ENCODE measurements at regions of chr9 and their contacts with region 1.

Region 1: DNA sequence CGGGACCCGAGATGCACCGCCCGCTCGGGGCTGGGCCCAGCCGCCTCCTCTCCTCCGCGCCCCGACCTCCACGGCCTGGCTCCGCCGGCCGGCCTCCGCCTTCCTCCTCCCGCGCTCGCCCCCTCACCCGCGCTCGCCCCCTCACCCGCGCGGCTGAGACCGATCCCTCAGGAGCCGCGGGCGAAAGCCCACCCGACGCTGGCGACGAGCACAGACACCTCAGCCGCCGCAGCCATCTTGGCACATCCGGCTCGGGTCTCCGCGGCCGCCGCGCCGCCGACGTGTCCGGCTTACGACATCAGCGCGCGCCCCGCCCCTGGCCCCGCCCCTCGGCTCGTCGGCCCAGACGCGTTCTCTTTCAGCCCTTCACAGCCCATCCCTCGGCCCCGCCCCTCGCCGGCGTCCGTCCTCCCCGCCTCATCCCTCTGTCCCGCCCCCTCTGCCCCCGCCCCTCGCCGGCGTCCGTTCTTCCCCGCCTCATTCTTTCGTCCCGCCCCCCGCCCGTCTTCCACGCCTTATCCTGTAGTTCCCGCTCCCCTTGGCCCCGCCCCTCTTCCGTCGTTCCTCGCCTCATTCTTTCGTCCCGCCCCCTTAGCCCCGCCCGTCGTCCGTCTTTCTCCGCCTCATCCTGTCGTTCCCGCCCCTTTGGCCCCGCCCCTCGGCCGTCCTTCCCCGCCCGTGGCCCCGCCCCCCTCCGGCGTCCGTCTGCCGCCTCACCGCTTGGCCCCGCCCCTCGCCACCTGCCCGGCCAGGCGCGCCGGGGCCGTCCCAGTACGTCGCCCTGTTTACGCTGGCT is at the start of gene SEC16A:
- DNase-seq: peak; percentile 98 to 100 (median 99)
- ATAC-seq: peak; percentile 75
- H3K4me3 ChIP-seq: peak within 1 kb of the TSS; percentile 72 to 97
- H3K4me3 Mint-ChIP-seq: peak within 1 kb of the TSS; percentile 98
- H3K27ac ChIP-seq: peak within 1 kb of the TSS; percentile 97 to 99
- H3K27ac Mint-ChIP-seq: peak within 1 kb of the TSS; percentile 99
- H3K4me1 ChIP-seq: peaks cover 29% of the 10 kb centered on the region
- H3K4me1 Mint-ChIP-seq: peaks cover 37% of the 10 kb centered on the region
- H3K27me3 ChIP-seq: no peaks in the 10 kb centered on the region
- H3K27me3 Mint-ChIP-seq: no peaks in the 10 kb centered on the region
- CTCF ChIP-seq: no peak
- total RNA-seq, gene SEC16A: 81.0 to 83.5 TPM

Region 2: DNA sequence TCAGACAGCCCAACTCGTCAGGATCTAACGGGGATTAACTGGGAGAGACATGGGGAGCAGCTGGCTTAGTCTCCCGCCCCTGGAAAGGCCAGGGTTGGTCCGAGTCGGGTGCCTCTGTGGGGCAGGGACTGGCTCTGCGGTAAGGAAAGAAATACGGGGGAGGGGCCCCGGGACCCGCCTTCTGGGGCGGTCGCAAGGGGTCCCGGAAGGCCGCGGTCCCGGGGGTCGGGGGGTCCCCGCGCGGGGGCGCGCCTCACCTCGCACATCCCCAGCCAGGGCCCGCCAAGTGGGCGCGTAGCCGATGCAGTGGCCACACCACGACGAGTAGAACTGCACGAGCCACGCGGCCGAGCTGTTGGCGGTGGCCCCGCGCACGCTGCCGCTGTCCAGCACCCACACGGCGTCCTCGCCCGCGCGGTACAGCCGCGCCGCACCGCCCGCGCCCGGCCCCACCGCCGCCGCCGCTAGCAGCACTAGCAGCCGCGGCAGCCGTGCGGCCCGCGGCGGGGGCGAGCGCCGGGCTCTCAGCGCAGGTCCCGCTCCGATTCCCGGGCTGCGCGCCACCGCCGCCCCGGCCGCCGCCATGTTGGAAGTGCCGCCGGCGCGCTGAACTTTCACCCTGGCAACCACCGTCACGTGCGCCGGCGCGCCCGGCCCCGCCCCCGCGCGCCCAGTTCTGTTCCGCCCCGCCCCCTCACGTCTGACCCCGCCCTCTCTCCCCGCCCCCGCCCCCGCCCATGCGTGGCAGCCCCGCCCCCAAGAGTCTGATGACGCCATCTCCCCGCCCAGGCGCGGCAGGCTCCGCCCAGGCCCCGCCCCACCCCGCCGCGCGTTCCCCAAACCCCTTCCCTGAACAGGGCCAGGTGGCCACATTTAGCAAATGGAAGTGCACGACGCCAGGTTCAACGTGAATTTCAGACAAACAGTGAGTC is 237.5 kb before region 1 on chr9 and contains the start of gene QSOX2:
- CTCF ChIA-PET with region 1: no interaction called
- POLR2A ChIA-PET with region 1: no interaction called
- intact Hi-C with region 1: loop called in 1 of 2 experiments (anchors 5 kb)
- DNase-seq: peak; percentile 69 to 93 (median 82)
- ATAC-seq: peak; percentile 84
- H3K4me3 ChIP-seq: peak within 1 kb of the TSS; percentile 40 to 60
- H3K4me3 Mint-ChIP-seq: peak within 1 kb of the TSS; percentile 91
- H3K27ac ChIP-seq: peak within 1 kb of the TSS; percentile 33 to 37
- H3K27ac Mint-ChIP-seq: peak within 1 kb of the TSS; percentile 85
- H3K4me1 ChIP-seq: peaks cover 35% of the 10 kb centered on the region
- H3K4me1 Mint-ChIP-seq: peaks cover 32% of the 10 kb centered on the region
- H3K27me3 ChIP-seq: no peaks in the 10 kb centered on the region
- H3K27me3 Mint-ChIP-seq: no peaks in the 10 kb centered on the region
- CTCF ChIP-seq: no peak
- total RNA-seq, gene QSOX2: 13.8 to 14.2 TPM

Region 3: DNA sequence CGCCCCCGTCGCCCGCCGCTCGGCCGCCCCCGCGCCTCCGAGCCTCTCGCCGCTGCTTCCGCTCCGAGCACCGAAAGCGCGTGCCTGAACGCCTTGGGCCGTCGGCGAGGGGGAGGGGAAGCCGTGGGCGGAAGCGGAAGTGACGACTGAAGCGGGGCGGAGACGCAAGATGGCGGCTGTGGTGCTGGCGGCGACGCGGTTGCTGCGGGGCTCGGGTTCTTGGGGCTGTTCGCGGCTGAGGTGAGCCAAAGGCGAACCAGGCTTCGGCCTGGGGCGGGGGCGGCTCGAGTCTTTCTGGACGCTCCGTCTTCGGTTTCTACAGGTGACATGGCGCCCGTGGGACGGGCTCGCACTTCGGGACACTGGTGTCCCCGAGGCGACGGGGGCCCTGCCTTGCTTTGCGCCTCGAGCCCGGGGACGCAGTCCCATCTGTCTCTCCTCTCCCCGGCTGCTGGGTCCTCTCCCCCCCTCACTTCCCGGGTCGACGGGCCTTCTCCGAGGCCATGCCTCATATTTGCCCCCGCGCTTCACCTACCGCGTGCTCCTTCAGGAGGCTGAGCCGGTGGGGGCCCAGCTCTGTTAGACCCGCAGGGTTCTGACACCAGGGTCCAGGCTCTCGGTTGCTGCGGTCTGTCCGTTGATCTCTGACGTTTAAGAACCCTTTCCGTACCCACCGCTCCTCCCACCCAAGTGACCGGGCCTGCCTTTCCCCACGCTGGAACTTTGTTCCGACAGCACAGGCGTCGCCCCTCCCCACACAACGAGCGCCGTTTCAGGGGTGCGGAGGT is 72.3 kb before region 1 on chr9 and contains the starts of genes ENTR1 and PMPCA:
- CTCF ChIA-PET with region 1: interaction called, 3 read pairs
- POLR2A ChIA-PET with region 1: no interaction called
- intact Hi-C with region 1: loop called (anchors 1 kb)
- DNase-seq: peak; percentile 88 to 97 (median 96)
- ATAC-seq: peak; percentile 85
- H3K4me3 ChIP-seq: peak within 1 kb of the TSS; percentile 79 to 99
- H3K4me3 Mint-ChIP-seq: peak within 1 kb of the TSS; percentile 89
- H3K27ac ChIP-seq: peak within 1 kb of the TSS; percentile 88 to 96
- H3K27ac Mint-ChIP-seq: peak within 1 kb of the TSS; percentile 90
- H3K4me1 ChIP-seq: peaks cover 35% of the 10 kb centered on the region
- H3K4me1 Mint-ChIP-seq: peaks cover 40% of the 10 kb centered on the region
- H3K27me3 ChIP-seq: no peaks in the 10 kb centered on the region
- H3K27me3 Mint-ChIP-seq: no peaks in the 10 kb centered on the region
- CTCF ChIP-seq: no peak
- total RNA-seq, gene ENTR1: 33.0 to 34.4 TPM
- total RNA-seq, gene PMPCA: 107 to 111 TPM

Region 4: GRCh38 chr9:136545966-136546698 is 63.1 kb after region 1 on chr9 and contains the start of gene NOTCH1:
- CTCF ChIA-PET with region 1: interaction called, 14 read pairs
- POLR2A ChIA-PET with region 1: no interaction called
- intact Hi-C with region 1: loop called (anchors 1 kb)
- DNase-seq: peak; percentile 75 to 91 (median 83)
- ATAC-seq: peak; percentile 78
- H3K4me3 ChIP-seq: peak within 1 kb of the TSS; percentile 82 to 90
- H3K4me3 Mint-ChIP-seq: peak within 1 kb of the TSS; percentile 85
- H3K27ac ChIP-seq: peak within 1 kb of the TSS; percentile 50 to 55
- H3K27ac Mint-ChIP-seq: peak within 1 kb of the TSS; percentile 85
- H3K4me1 ChIP-seq: peaks cover 31% of the 10 kb centered on the region
- H3K4me1 Mint-ChIP-seq: peaks cover 27% of the 10 kb centered on the region
- H3K27me3 ChIP-seq: no peaks in the 10 kb centered on the region
- H3K27me3 Mint-ChIP-seq: no peaks in the 10 kb centered on the region
- CTCF ChIP-seq: no peak
- total RNA-seq, gene NOTCH1: 29.0 to 30.0 TPM

Region 5: GRCh38 chr9:136671646-136672430 is 188.8 kb after region 1 on chr9:
- CTCF ChIA-PET with region 1: interaction called, 8 read pairs
- POLR2A ChIA-PET with region 1: no interaction called
- intact Hi-C with region 1: loop called in 1 of 2 experiments (anchors 1 kb)
- DNase-seq: peak in 7 of 9 experiments; percentile 20 to 58 (median 46)
- ATAC-seq: peak; percentile 72
- H3K4me3 ChIP-seq: no peak overlapping the region
- H3K4me3 Mint-ChIP-seq: no peak overlapping the region
- H3K27ac ChIP-seq: no peak overlapping the region
- H3K27ac Mint-ChIP-seq: no peak overlapping the region
- H3K4me1 ChIP-seq: no peaks in the 10 kb centered on the region
- H3K4me1 Mint-ChIP-seq: no peaks in the 10 kb centered on the region
- H3K27me3 ChIP-seq: no peaks in the 10 kb centered on the region
- H3K27me3 Mint-ChIP-seq: no peaks in the 10 kb centered on the region
- CTCF ChIP-seq: peak; percentile 71

Region 6: DNA sequence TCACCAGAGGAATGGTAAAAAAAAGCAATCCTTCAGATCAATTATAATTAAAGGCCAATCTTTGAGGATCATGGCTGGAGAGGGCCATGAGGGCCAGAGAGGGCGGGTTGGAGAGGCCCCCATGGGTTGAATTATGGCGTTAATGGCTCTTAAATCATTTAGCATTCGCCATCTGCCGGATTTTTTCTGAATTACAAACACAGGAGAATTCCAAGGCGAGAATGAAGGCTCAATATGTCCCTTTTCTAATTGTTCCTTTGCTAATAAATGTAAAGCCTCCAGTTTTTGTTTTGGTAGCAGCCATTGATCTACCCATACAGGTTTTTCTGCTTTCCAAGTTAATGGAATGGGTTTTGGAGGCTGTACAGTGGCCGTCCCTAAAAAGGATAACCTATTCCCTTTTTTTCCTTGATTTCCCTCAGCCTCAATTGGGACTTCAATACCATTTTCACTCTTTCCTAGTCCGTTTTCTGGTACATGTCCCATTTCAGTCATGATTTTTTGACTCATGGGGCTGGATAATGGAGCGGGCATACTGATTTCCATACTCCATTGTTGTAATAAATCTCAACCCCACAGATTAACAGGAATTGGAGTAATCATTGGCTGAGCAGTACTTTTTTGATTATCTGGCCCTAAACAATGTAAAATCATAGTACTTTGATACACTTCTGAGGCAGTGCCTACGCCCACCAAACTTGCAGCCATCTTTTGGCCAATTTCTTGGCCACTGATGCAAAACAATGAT is 301.4 kb after region 1 on chr9:
- CTCF ChIA-PET with region 1: no interaction called
- POLR2A ChIA-PET with region 1: no interaction called
- intact Hi-C with region 1: no loop called
- DNase-seq: peak in 1 of 9 experiments; percentile 46
- ATAC-seq: no peak
- H3K4me3 ChIP-seq: no peak overlapping the region
- H3K4me3 Mint-ChIP-seq: no peak overlapping the region
- H3K27ac ChIP-seq: no peak overlapping the region
- H3K27ac Mint-ChIP-seq: no peak overlapping the region
- H3K4me1 ChIP-seq: peaks cover 7% of the 10 kb centered on the region
- H3K4me1 Mint-ChIP-seq: peaks cover 8% of the 10 kb centered on the region
- H3K27me3 ChIP-seq: no peaks in the 10 kb centered on the region
- H3K27me3 Mint-ChIP-seq: no peaks in the 10 kb centered on the region
- CTCF ChIP-seq: peak; percentile 53

Region 7: DNA sequence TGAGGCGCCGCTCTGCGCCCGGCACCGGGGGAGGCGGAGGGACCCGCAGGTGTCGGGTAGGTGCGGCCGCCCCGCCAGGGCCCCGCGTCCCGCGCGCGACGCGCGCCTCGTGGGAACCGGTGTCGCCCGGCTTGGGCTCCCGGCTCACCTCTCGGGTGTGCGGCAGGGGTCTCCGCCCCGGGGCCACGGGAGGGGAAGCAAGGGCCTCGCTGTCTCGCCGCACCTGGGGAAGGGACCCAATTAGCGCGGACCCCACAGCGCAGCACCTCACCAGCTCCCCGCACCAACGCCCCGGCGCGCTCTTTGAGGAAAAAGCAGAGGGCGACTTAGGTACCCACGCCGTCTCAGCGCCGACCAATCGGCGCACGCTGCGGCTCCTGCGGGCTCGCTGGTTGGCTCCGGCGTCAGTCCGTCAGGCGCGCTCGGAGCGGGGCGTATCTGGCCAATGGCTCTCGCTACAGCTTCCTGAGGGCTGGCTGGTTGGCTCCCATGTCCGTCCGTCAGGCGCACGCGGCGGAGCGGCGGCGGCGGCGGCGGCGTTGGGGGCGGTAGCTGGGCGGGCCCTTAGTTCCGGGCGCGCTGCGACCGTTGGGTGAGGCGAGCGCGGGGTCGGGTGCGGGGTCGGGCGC is 403.1 kb after region 1 on chr9 and contains the start of gene TRAF2:
- CTCF ChIA-PET with region 1: no interaction called
- POLR2A ChIA-PET with region 1: no interaction called
- intact Hi-C with region 1: loop called in 1 of 2 experiments (anchors 5 kb)
- DNase-seq: peak; percentile 94 to 100 (median 97)
- ATAC-seq: peak; percentile 88
- H3K4me3 ChIP-seq: peak within 1 kb of the TSS; percentile 83 to 85
- H3K4me3 Mint-ChIP-seq: peak within 1 kb of the TSS; percentile 83
- H3K27ac ChIP-seq: peak within 1 kb of the TSS; percentile 53 to 92
- H3K27ac Mint-ChIP-seq: peak within 1 kb of the TSS; percentile 95
- H3K4me1 ChIP-seq: peaks cover 43% of the 10 kb centered on the region
- H3K4me1 Mint-ChIP-seq: peaks cover 36% of the 10 kb centered on the region
- H3K27me3 ChIP-seq: no peaks in the 10 kb centered on the region
- H3K27me3 Mint-ChIP-seq: no peaks in the 10 kb centered on the region
- CTCF ChIP-seq: no peak
- total RNA-seq, gene TRAF2: 7.1 to 11.8 TPM

Region 8: GRCh38 chr9:137254624-137255447 is 771.8 kb after region 1 on chr9 and contains the start of gene NELFB:
- CTCF ChIA-PET with region 1: no interaction called
- POLR2A ChIA-PET with region 1: no interaction called
- intact Hi-C with region 1: loop called in 1 of 2 experiments (anchors 2 kb)
- DNase-seq: peak; percentile 91 to 99 (median 95)
- ATAC-seq: peak; percentile 92
- H3K4me3 ChIP-seq: peak within 1 kb of the TSS; percentile 81 to 83
- H3K4me3 Mint-ChIP-seq: peak within 1 kb of the TSS; percentile 88
- H3K27ac ChIP-seq: peak within 1 kb of the TSS; percentile 12 to 38
- H3K27ac Mint-ChIP-seq: peak within 1 kb of the TSS; percentile 73
- H3K4me1 ChIP-seq: peaks cover 18% of the 10 kb centered on the region
- H3K4me1 Mint-ChIP-seq: peaks cover 15% of the 10 kb centered on the region
- H3K27me3 ChIP-seq: no peaks in the 10 kb centered on the region
- H3K27me3 Mint-ChIP-seq: no peaks in the 10 kb centered on the region
- CTCF ChIP-seq: no peak
- total RNA-seq, gene NELFB: 17.1 to 17.6 TPM